K562 (cell line): ENCODE measurements at regions of chr2 and their contacts with region 1.

Region 1: GRCh38 chr2:84302513-84303412 is 156.3 kb downstream of the SUCLG1 start:
- DNase-seq: peak; percentile 67 to 80 (median 77)
- ATAC-seq: peak; percentile 94
- H3K4me3 ChIP-seq: no peak overlapping the region
- H3K27ac ChIP-seq: no peak overlapping the region
- H3K4me1 ChIP-seq: no peaks in the 10 kb centered on the region
- H3K27me3 ChIP-seq: no peaks in the 10 kb centered on the region
- CTCF ChIP-seq: peak; percentile 56 to 82 (median 77)
- EP300 ChIP-seq: no peak
- POLR2A ChIP-seq: no peak
- RAD21 ChIP-seq: peak; percentile 66 to 74

Region 2: DNA sequence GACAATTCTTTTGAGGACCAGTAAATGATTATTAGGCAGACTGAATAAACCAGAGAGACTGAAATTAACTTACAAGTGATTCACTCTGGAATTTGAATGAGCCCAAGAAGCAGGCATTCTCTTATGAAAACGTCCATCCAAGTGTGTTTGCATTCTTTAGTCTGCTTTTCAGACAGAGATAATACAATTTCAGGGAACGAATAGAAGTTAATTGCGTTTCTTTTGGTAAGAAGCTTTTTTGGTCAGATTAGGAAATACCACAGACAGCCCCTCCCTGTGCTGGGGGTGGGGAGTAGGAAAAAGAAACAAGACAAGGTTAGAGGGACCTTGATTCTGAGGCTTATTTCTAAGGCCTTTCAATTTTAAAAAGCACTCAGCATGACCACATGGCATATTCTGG is 718.1 kb before region 1 on chr2:
- CTCF ChIA-PET with region 1: no interaction called
- POLR2A ChIA-PET with region 1: no interaction called
- in situ Hi-C with region 1: no loop called
- intact Hi-C with region 1: loop called (anchors 10 kb)
- DNase-seq: peak in 1 of 4 experiments; percentile 5
- ATAC-seq: no peak
- H3K4me3 ChIP-seq: no peak overlapping the region
- H3K27ac ChIP-seq: no peak overlapping the region
- H3K4me1 ChIP-seq: no peaks in the 10 kb centered on the region
- H3K27me3 ChIP-seq: no peaks in the 10 kb centered on the region
- CTCF ChIP-seq: no peak
- EP300 ChIP-seq: no peak
- POLR2A ChIP-seq: no peak
- RAD21 ChIP-seq: no peak

Region 3: DNA sequence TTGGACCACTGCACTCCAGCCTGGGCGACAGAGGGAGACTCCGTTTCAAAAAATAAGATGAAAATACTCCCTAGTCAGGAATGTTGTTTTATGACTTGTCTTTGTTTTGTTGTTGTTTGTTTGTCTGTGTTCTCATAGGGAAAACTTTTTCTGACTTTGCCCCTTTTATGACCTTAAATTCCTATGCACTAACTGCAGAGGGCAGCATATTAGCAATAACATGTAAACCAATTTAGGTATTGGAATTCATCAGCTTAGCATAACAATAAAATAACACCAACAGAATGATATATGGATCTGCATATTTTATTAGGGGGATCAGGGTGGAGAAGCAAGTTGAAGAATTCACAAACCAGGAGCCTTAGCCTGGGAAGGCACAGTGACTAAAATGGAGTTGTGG is 475.1 kb before region 1 on chr2:
- CTCF ChIA-PET with region 1: no interaction called
- POLR2A ChIA-PET with region 1: no interaction called
- in situ Hi-C with region 1: loop called (anchors 10 kb)
- intact Hi-C with region 1: loop called (anchors 1 kb)
- DNase-seq: peak in 1 of 4 experiments; percentile 5
- ATAC-seq: no peak
- H3K4me3 ChIP-seq: no peak overlapping the region
- H3K27ac ChIP-seq: no peak overlapping the region
- H3K4me1 ChIP-seq: no peaks in the 10 kb centered on the region; a peak in 1 of 5 replicates
- H3K27me3 ChIP-seq: no peaks in the 10 kb centered on the region
- CTCF ChIP-seq: peak; percentile 31 to 56 (median 34); a peak in 4 of 6 replicates
- EP300 ChIP-seq: no peak
- POLR2A ChIP-seq: no peak
- RAD21 ChIP-seq: peak; percentile 17 to 44; a peak in 2 of 4 replicates

Region 4: DNA sequence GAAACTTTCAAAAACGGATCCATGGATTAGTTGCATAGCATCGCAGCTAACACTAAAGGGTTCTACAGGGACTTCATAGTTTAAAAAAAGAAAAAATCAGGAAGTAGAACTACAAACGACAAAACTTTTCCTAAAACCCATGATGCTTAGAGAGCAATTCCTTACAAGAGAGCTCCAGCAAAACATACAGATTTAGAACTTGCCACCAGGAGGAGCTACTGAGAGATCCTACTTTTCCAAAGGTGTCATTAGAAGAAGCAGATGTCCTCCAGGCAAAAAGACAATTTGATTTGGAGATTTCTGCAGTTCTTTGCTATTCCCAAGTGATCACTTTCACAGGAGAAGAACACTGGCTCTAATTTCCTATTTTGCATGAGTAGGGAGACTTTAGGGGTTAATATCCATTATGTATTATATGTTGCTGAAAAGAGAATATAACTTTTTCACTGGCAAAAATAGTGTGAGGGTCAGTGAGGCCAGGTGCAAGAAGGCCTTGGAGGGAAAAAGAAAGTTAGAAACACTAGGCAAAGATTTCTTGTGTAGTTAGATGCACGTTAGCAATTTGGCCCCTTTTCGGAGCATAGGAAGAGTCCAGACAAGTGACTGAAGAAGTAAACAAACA is 279.8 kb before region 1 on chr2:
- CTCF ChIA-PET with region 1: no interaction called
- POLR2A ChIA-PET with region 1: no interaction called
- in situ Hi-C with region 1: no loop called
- intact Hi-C with region 1: loop called (anchors 5 kb)
- DNase-seq: peak; percentile 42 to 75 (median 55)
- ATAC-seq: peak; percentile 86
- H3K4me3 ChIP-seq: no peak overlapping the region
- H3K27ac ChIP-seq: no peak overlapping the region
- H3K4me1 ChIP-seq: no peaks in the 10 kb centered on the region
- H3K27me3 ChIP-seq: no peaks in the 10 kb centered on the region
- CTCF ChIP-seq: peak; percentile 55 to 75 (median 74); a peak in 5 of 6 replicates
- EP300 ChIP-seq: no peak
- POLR2A ChIP-seq: no peak
- RAD21 ChIP-seq: peak; percentile 49 to 59

Region 5: GRCh38 chr2:84077492-84077891 is 225.3 kb before region 1 on chr2:
- CTCF ChIA-PET with region 1: no interaction called
- POLR2A ChIA-PET with region 1: no interaction called
- in situ Hi-C with region 1: no loop called
- intact Hi-C with region 1: loop called (anchors 5 kb)
- DNase-seq: peak; percentile 23 to 53 (median 29)
- ATAC-seq: peak; percentile 83
- H3K4me3 ChIP-seq: no peak overlapping the region
- H3K27ac ChIP-seq: no peak overlapping the region
- H3K4me1 ChIP-seq: peaks cover 0 to 2% of the 10 kb centered on the region in 2 experiments; a peak in 2 of 5 replicates
- H3K27me3 ChIP-seq: no peaks in the 10 kb centered on the region; a peak in 2 of 5 replicates
- CTCF ChIP-seq: peak; percentile 37 to 69 (median 55); a peak in 5 of 6 replicates
- EP300 ChIP-seq: no peak
- POLR2A ChIP-seq: no peak
- RAD21 ChIP-seq: peak; percentile 43 to 63

Region 6: GRCh38 chr2:84132370-84132769 is 170.4 kb before region 1 on chr2:
- CTCF ChIA-PET with region 1: no interaction called
- POLR2A ChIA-PET with region 1: no interaction called
- in situ Hi-C with region 1: no loop called
- intact Hi-C with region 1: no loop called
- DNase-seq: no peak
- ATAC-seq: no peak
- H3K4me3 ChIP-seq: no peak overlapping the region
- H3K27ac ChIP-seq: no peak overlapping the region
- H3K4me1 ChIP-seq: no peaks in the 10 kb centered on the region
- H3K27me3 ChIP-seq: no peaks in the 10 kb centered on the region
- CTCF ChIP-seq: no peak
- EP300 ChIP-seq: no peak
- POLR2A ChIP-seq: no peak
- RAD21 ChIP-seq: no peak

Region 7: GRCh38 chr2:84276585-84277255 is 26.0 kb before region 1 on chr2:
- CTCF ChIA-PET with region 1: no interaction called
- POLR2A ChIA-PET with region 1: no interaction called
- in situ Hi-C with region 1: no loop called
- intact Hi-C with region 1: no loop called
- DNase-seq: no peak
- ATAC-seq: no peak
- H3K4me3 ChIP-seq: no peak overlapping the region
- H3K27ac ChIP-seq: no peak overlapping the region
- H3K4me1 ChIP-seq: no peaks in the 10 kb centered on the region; a peak in 1 of 5 replicates
- H3K27me3 ChIP-seq: no peaks in the 10 kb centered on the region
- CTCF ChIP-seq: no peak
- EP300 ChIP-seq: no peak
- POLR2A ChIP-seq: no peak
- RAD21 ChIP-seq: no peak